ENCODE measurements at regions of chr12 and their contacts with region 1.

Region 1: GRCh38 chr12:95217377-95218149 is at the starts of genes FGD6 and VEZT:
- DNase-seq: peak; percentile 99
- H3K4me3 ChIP-seq: peak within 1 kb of the TSS; percentile 84
- H3K4me3 Mint-ChIP-seq: peak within 1 kb of the TSS; percentile 81
- H3K27ac Mint-ChIP-seq: peak within 1 kb of the TSS; percentile 88
- H3K4me1 ChIP-seq: peaks cover 15% of the 10 kb centered on the region; the same call in 1 of the 2 replicates
- H3K4me1 Mint-ChIP-seq: peaks cover 23% of the 10 kb centered on the region
- H3K27me3 ChIP-seq: no peaks in the 10 kb centered on the region
- H3K27me3 Mint-ChIP-seq: no peaks in the 10 kb centered on the region
- CTCF ChIP-seq: peak in 1 of 2 experiments; percentile 30
- total RNA-seq, gene FGD6: 23.5 and 25.1 TPM in 2 replicates
- total RNA-seq, gene VEZT: 76.9 and 77.4 TPM in 2 replicates

Region 2: DNA sequence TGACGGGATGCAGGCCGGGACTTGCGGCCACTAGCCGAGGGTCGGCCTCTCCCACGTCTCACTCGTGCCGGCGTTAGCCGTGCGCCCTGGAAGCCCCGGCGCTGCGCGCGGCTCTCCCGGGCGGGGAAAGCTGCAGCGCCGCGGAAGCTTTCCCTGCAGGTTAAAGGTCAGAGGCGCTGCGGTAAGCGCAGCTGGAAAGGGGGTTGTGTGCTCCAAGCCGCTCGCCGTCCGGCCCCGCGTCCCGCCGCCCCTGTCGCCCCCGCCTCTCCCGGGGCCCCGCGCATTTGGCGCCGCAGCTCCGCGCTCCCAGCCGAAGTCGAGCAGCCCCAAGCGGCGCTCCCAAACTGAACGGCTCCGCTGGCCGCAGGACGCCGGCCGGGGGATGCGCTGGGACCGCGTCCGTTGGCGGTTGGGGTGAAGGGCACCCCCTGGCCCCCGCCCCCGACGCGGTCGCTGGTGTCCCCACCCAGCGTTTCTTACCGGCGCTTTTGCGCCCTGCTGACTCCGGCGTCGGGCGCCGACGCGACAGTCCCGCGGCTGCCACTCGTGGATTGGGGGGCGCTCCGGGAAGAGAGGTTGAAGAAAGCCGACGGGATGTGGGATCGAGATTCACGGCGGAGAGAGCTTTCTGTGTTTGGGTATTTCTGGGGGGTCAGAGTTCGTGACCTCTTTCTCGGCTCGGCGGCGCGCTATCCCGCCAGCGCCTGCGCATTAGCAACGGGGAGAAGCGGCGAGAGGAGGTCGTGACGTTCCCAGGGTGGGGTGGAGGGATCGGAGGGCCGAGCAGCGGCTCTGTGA is 144.5 kb before region 1 on chr12 and contains the start of gene NR2C1:
- CTCF ChIA-PET with region 1: interaction called, 3 read pairs
- POLR2A ChIA-PET with region 1: interaction called, 4 read pairs
- intact Hi-C with region 1: loop called (anchors 2 kb)
- DNase-seq: peak; percentile 96 to 97
- H3K4me3 ChIP-seq: peak within 1 kb of the TSS; percentile 94
- H3K4me3 Mint-ChIP-seq: peak within 1 kb of the TSS; percentile 91
- H3K27ac Mint-ChIP-seq: peak within 1 kb of the TSS; percentile 94
- H3K4me1 ChIP-seq: peaks cover 5% of the 10 kb centered on the region; the same call in 1 of the 2 replicates
- H3K4me1 Mint-ChIP-seq: peaks cover 6% of the 10 kb centered on the region
- H3K27me3 ChIP-seq: no peaks in the 10 kb centered on the region
- H3K27me3 Mint-ChIP-seq: no peaks in the 10 kb centered on the region
- CTCF ChIP-seq: peak in 1 of 2 experiments; percentile 59
- total RNA-seq, gene NR2C1: 49.7 and 51.1 TPM in 2 replicates

Region 3: GRCh38 chr12:95164656-95165055 is 52.9 kb before region 1 on chr12:
- CTCF ChIA-PET with region 1: no interaction called
- POLR2A ChIA-PET with region 1: interaction called, 14 read pairs
- intact Hi-C with region 1: loop called (anchors 2 kb)
- DNase-seq: no peak
- H3K4me3 ChIP-seq: peak overlapping the region; percentile 29
- H3K4me3 Mint-ChIP-seq: peak overlapping the region; percentile 71
- H3K27ac Mint-ChIP-seq: peak overlapping the region; percentile 71
- H3K4me1 ChIP-seq: peaks cover 40% of the 10 kb centered on the region
- H3K4me1 Mint-ChIP-seq: peaks cover 40% of the 10 kb centered on the region
- H3K27me3 ChIP-seq: no peaks in the 10 kb centered on the region
- H3K27me3 Mint-ChIP-seq: no peaks in the 10 kb centered on the region
- CTCF ChIP-seq: no peak

Region 4: GRCh38 chr12:95187865-95188415 is 29.6 kb before region 1 on chr12:
- CTCF ChIA-PET with region 1: interaction called, 13 read pairs
- POLR2A ChIA-PET with region 1: interaction called, 3 read pairs
- intact Hi-C with region 1: no loop called
- DNase-seq: no peak
- H3K4me3 ChIP-seq: no peak overlapping the region
- H3K4me3 Mint-ChIP-seq: peak overlapping the region; percentile 49
- H3K27ac Mint-ChIP-seq: no peak overlapping the region
- H3K4me1 ChIP-seq: peaks cover 24% of the 10 kb centered on the region
- H3K4me1 Mint-ChIP-seq: peaks cover 20% of the 10 kb centered on the region
- H3K27me3 ChIP-seq: no peaks in the 10 kb centered on the region
- H3K27me3 Mint-ChIP-seq: no peaks in the 10 kb centered on the region
- CTCF ChIP-seq: no peak

Region 5: GRCh38 chr12:95318071-95318545 is 100.5 kb after region 1 on chr12:
- CTCF ChIA-PET with region 1: interaction called, 3 read pairs
- POLR2A ChIA-PET with region 1: no interaction called
- intact Hi-C with region 1: loop called (anchors 1 kb)
- DNase-seq: peak; percentile 46 to 83
- H3K4me3 ChIP-seq: no peak overlapping the region
- H3K4me3 Mint-ChIP-seq: peak overlapping the region; percentile 1
- H3K27ac Mint-ChIP-seq: peak overlapping the region; percentile 58
- H3K4me1 ChIP-seq: peaks cover 54% of the 10 kb centered on the region
- H3K4me1 Mint-ChIP-seq: peaks cover 21% of the 10 kb centered on the region
- H3K27me3 ChIP-seq: no peaks in the 10 kb centered on the region
- H3K27me3 Mint-ChIP-seq: no peaks in the 10 kb centered on the region
- CTCF ChIP-seq: no peak

Region 6: DNA sequence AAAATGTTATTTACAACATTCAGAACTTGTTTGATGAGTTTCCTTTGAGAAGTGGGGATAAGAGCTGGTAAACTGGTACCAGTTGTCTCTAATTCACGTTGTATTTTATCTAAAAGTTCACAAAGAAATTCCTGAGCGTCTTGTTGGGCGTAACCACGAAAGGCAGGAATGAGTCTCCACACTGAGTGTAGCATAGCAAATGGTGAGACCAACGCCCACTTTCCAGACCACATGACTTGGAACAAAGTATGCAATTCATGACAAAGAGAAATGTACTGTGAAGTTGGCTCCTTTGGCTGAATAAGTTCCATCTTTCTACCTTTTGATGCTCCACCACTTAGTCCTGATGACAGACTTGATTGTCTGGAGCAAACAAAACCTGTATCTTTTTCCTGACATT is 315.3 kb after region 1 on chr12:
- CTCF ChIA-PET with region 1: interaction called, 9 read pairs
- POLR2A ChIA-PET with region 1: no interaction called
- intact Hi-C with region 1: loop called (anchors 5 kb)
- DNase-seq: no peak
- H3K4me3 ChIP-seq: no peak overlapping the region
- H3K4me3 Mint-ChIP-seq: no peak overlapping the region
- H3K27ac Mint-ChIP-seq: no peak overlapping the region
- H3K4me1 ChIP-seq: peaks cover 22% of the 10 kb centered on the region
- H3K4me1 Mint-ChIP-seq: peaks cover 28% of the 10 kb centered on the region
- H3K27me3 ChIP-seq: no peaks in the 10 kb centered on the region
- H3K27me3 Mint-ChIP-seq: no peaks in the 10 kb centered on the region
- CTCF ChIP-seq: no peak

Region 7: GRCh38 chr12:96153131-96153725 is 935.7 kb after region 1 on chr12:
- CTCF ChIA-PET with region 1: no interaction called
- POLR2A ChIA-PET with region 1: no interaction called
- intact Hi-C with region 1: no loop called
- DNase-seq: no peak
- H3K4me3 ChIP-seq: no peak overlapping the region
- H3K4me3 Mint-ChIP-seq: no peak overlapping the region
- H3K27ac Mint-ChIP-seq: no peak overlapping the region
- H3K4me1 ChIP-seq: no peaks in the 10 kb centered on the region
- H3K4me1 Mint-ChIP-seq: no peaks in the 10 kb centered on the region
- H3K27me3 ChIP-seq: no peaks in the 10 kb centered on the region
- H3K27me3 Mint-ChIP-seq: no peaks in the 10 kb centered on the region
- CTCF ChIP-seq: no peak

Measured in Caco-2 (cell line).